Psoas muscle (tissue), 8 donors: ENCODE measurements at regions of chr10 and their contacts with region 1.

Region 1: DNA sequence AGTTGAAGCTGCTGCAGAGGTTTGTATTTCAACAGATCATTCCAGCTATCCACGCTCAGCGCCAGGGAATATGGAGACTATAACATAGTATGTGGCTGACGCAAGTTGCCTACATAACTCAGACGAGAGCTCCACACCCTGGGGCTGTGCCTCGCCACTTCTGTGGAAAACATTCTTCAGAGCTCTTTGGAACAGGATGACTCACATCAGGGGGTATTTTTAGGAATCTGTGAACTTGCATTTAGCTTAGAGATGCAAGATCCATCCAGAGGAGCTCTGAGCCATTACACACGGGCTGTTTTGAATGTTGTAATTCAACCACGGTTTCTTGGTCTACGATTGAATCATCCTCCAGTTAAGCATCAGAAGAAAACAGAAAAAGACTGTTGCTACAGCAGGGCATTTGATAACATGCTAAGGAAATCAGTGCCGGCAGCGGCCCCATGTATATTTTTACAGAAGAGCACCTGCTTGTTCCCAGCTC is 481.5 kb upstream of the AKR1E2 start:
- DNase-seq: peak; percentile 73 to 85
- ATAC-seq: peak; percentile 96 to 99 (median 97)
- H3K4me3 ChIP-seq: peak overlapping the region; percentile 16
- H3K27ac ChIP-seq: peak overlapping the region; percentile 80
- H3K4me1 ChIP-seq: peaks cover 31% of the 10 kb centered on the region
- H3K27me3 ChIP-seq: no peaks in the 10 kb centered on the region
- CTCF ChIP-seq: peak; percentile 9

Region 2: DNA sequence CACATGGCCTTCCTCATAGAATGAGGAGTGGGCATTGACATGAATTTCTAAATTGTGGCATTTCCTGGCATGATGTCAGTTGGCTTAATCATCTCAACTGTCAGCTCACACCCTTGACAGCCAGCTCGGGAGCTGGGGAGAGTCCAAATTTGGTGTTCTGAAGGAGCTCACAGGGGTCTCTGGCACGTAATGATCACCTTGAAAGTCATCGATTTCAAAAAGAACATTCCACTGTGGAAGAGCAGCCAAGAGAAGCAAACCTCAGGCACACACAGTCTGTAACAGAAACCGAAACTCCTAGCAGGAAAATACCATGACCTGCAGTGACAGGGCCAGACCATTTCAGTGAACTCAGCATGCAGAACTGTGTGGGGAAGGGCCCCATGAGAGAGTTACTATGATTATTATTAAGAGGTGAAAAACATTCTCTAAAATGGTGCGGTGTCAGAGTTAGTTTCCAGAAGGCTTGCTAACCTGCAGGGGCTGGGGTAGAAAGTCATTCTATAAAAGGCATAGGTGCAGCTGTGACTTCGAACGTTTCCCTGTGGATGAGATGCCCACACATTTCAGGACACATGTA is 533.2 kb before region 1 on chr10:
- intact Hi-C with region 1: loop called in 1 of 2 experiments (anchors 10 kb)
- DNase-seq: no peak
- ATAC-seq: peak in 3 of 4 donors; percentile 22 to 36 (median 27)
- H3K4me3 ChIP-seq: peak overlapping the region; percentile 55
- H3K27ac ChIP-seq: peak overlapping the region; percentile 95
- H3K4me1 ChIP-seq: peaks cover 45% of the 10 kb centered on the region
- H3K27me3 ChIP-seq: no peaks in the 10 kb centered on the region
- CTCF ChIP-seq: no peak

Region 3: GRCh38 chr10:4867520-4868356 is 523.2 kb after region 1 on chr10:
- intact Hi-C with region 1: no loop called
- DNase-seq: no peak
- ATAC-seq: no peak
- H3K4me3 ChIP-seq: no peak overlapping the region
- H3K27ac ChIP-seq: no peak overlapping the region
- H3K4me1 ChIP-seq: no peaks in the 10 kb centered on the region
- H3K27me3 ChIP-seq: no peaks in the 10 kb centered on the region
- CTCF ChIP-seq: no peak